Activated CD8-positive, alpha-beta T cell treated with anti-CD3 and anti-CD28 coated beads, Interleukin-2, amount 10 ng/mL, durations not matched to agents 7 days and 5 days (primary cell): ENCODE measurements at regions of chr2 and their contacts with region 1.

Region 1: DNA sequence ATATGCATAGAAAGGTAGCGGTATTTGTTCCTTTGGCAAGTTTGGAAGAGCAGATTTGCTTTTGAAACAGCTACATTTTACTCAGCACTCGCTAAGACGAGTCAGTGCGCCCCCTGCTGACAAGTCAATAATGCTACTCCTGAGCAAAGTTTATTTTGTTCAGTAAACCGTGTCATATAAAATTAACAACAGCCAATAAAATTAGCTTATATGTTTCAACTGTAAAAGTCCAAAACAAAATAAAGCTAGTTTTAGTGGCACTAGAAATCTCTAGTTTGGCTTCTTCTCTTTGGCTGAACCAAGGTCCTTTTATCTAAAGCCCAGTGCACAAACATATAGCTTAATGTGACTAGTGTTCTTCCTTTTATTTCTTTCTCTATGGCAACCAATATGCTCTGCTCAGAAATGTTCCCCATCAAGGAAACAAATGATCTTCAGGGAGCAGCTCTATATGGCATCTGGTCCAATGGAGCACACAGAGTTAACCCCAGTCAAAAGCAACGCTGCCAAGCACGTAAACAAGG is 4.2 kb upstream of the POU3F3 start:
- DNase-seq: peak; percentile 79
- ATAC-seq: no peak
- H3K4me3 Mint-ChIP-seq: no peak overlapping the region
- H3K27ac Mint-ChIP-seq: no peak overlapping the region
- H3K4me1 Mint-ChIP-seq: peaks cover 21% of the 10 kb centered on the region
- H3K27me3 Mint-ChIP-seq: peaks cover 89% of the 10 kb centered on the region

Region 2: GRCh38 chr2:103161456-103162289 is 1688.0 kb before region 1 on chr2:
- CTCF ChIA-PET with region 1: interaction called, 13 read pairs
- POLR2A ChIA-PET with region 1: no interaction called
- DNase-seq: peak; percentile 25
- ATAC-seq: no peak
- H3K4me3 Mint-ChIP-seq: no peak overlapping the region
- H3K27ac Mint-ChIP-seq: no peak overlapping the region
- H3K4me1 Mint-ChIP-seq: no peaks in the 10 kb centered on the region
- H3K27me3 Mint-ChIP-seq: peaks cover 8% of the 10 kb centered on the region

Region 3: GRCh38 chr2:104572834-104573233 is 276.8 kb before region 1 on chr2:
- CTCF ChIA-PET with region 1: no interaction called
- POLR2A ChIA-PET with region 1: no interaction called
- DNase-seq: no peak
- ATAC-seq: no peak
- H3K4me3 Mint-ChIP-seq: no peak overlapping the region
- H3K27ac Mint-ChIP-seq: no peak overlapping the region
- H3K4me1 Mint-ChIP-seq: no peaks in the 10 kb centered on the region
- H3K27me3 Mint-ChIP-seq: no peaks in the 10 kb centered on the region

Region 4: GRCh38 chr2:104861351-104862057 is 11.8 kb after region 1 on chr2:
- CTCF ChIA-PET with region 1: interaction called, 14 read pairs
- POLR2A ChIA-PET with region 1: no interaction called
- DNase-seq: no peak
- ATAC-seq: no peak
- H3K4me3 Mint-ChIP-seq: no peak overlapping the region
- H3K27ac Mint-ChIP-seq: no peak overlapping the region
- H3K4me1 Mint-ChIP-seq: peaks cover 14% of the 10 kb centered on the region
- H3K27me3 Mint-ChIP-seq: peaks cover 85% of the 10 kb centered on the region

Region 5: DNA sequence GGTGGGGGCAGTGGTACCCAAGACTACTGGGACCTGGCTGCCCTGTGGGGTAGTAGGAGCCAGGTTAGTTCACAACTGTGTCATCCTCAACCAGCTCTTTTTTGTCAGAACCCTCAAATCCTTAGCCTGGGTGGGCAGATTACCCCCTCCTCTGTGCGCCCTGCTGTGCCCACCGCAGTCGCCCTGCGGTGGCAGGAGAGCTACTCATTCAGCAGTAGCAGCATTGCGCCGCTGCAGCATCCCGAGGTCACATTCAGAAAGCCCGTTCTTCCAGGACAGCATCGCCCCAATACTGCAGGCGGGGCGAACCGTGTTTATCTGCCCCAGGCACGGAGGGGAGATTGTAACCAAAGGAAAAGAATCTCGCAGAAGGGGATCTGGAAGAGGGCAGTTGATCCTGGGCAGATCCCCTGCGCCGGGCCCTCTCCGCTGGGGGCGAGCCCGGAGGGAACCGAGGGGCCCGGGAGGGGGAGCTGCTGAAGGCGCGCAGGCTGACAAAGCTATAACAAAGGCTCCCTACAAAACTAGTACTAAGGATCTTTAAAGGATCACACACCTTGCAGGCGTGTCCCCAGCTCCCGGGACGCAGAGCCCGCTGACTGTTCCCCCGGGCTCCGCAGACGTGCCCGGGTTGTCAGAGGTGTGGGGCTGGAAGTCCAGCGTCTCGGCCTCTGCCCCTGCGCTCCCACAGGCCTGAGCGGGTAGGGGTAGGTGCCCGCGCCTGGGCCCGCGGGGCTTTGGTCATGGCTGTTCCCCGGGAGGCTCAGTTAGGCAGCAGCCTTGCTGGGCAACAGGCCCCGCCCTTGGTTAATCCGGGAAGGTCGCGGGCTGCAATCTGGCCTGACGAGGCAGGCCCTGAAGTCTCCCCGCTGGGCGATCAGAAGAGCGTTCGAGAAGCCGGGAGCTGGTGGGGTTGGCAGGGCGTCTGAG is 17.5 kb after region 1 on chr2:
- CTCF ChIA-PET with region 1: interaction called, 14 read pairs
- POLR2A ChIA-PET with region 1: no interaction called
- DNase-seq: no peak
- ATAC-seq: no peak
- H3K4me3 Mint-ChIP-seq: no peak overlapping the region
- H3K27ac Mint-ChIP-seq: no peak overlapping the region
- H3K4me1 Mint-ChIP-seq: peaks cover 6% of the 10 kb centered on the region
- H3K27me3 Mint-ChIP-seq: peaks cover 78% of the 10 kb centered on the region

Region 6: DNA sequence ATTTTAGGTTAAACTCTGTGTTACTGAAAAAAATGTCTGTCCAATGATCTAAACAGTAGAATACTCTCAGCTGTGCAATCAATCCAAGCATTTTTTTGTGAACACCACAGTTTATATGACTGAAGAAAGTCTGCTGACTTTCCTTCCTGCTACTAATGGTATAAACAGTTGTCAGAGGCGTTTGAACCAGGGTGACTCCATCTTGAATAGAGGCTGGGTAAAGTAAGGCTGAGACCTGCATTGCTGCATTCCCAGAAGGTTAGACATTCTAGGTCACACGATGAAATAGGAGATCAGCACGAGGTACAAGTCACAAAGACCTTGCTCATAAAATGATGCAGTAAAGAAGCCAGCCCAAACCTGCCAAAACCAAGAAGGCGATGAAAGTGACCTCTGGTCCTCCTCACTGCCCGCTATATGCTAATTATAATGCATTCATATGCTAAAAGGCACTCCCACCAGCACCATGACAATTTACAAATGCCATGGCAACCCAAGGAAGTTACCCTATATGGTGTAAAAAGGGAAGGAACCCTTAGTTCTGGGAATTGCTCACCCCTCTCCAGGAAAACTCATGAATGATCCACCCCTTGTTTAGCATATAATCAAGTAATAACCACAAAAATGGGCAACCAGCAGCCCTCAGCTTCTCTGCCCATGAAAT is 35.6 kb after region 1 on chr2:
- CTCF ChIA-PET with region 1: no interaction called
- POLR2A ChIA-PET with region 1: no interaction called
- DNase-seq: no peak
- ATAC-seq: no peak
- H3K4me3 Mint-ChIP-seq: no peak overlapping the region
- H3K27ac Mint-ChIP-seq: no peak overlapping the region
- H3K4me1 Mint-ChIP-seq: peaks cover 13% of the 10 kb centered on the region
- H3K27me3 Mint-ChIP-seq: peaks cover 6% of the 10 kb centered on the region